Mucosa of descending colon (tissue), 3 donors: ENCODE measurements at regions of chr3 and their contacts with region 1.

Region 1: DNA sequence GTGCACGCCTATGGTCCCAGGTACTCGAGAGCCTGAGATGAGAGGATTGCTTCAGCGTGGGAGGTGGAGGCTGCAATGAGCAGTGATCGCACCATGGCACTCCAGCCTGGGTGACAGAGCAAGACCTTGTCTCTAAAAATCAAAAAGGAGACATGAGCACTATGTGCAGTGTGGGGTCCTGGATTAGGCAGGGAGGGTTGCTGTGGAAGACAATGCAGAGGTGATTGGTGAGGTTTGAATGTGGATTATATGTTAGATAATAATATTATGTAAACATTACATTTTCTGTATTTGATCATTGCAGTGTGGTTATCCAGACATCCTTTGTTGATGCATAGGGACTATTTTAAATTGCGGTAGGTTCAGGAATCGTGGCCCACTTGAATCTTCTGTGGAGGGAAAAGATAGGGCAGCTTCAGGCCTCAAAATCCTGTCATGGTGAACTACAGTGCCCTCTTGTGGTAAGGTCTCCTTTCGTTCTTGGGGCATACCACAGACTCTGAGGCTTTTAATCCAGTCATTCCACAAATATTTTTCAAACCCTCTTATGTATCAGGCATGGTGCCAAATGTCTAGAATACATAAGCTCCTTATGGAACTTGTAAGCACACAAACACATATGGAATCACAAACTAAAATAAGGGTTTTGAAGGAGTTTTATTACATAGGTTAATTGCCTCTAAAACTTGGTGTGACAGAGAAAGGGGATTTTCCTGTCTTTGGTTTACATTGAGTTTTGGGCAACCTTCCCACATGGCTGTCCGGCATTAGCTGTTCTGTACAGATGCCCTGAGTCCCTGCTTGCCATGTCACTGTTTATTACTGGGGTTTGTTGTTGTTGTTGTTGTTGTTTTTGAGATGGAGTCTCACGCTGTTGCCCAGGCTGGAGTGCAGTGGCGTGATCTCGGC is 37.7 kb downstream of the GPD1L start:
- DNase-seq: peak in 1 of 3 donors; percentile 86
- ATAC-seq: peak; percentile 87
- H3K4me3 ChIP-seq: no peak overlapping the region
- H3K4me1 ChIP-seq: no peaks in the 10 kb centered on the region
- CTCF ChIP-seq: peak; percentile 55

Region 2: DNA sequence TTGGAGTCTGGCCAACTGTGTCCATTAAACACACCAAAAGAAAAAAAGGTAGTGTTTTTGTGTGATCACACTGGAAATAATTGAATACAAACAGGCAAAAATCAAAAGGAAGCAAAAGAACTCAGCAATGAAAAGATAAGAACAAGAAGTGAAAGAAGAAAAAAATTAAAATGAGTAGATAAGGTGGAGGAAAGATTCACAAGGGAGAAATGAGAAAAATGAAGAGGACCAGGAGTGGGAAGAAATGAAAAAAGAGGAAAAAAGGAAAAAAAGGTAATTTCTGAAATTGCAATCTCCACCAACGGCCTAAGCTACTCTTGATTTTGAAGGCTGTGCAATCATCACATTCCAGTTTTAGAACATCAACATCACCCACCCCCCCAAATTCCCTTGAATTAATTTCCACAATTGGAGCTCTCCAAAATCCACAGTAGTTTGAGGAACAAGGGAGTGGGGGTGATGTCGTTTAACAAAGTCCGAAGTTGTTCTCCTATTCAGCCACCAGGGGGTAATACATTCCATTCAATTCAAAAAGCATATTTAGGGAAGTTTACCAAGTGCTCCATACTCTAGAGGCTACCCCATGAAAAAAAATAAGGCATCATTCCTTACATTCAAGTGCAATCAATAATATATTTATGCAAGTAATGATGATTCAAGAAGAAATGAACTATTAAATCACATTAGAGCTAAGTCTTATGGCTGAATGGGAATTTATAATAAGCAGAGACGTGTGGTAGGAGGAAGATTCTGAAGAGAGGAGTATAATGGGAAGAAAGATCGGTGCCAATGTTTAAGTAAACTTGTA is 125.1 kb before region 1 on chr3:
- intact Hi-C with region 1: loop called (anchors 2 to 5 kb)
- DNase-seq: peak in 1 of 3 donors; percentile 43
- ATAC-seq: peak; percentile 86
- H3K4me3 ChIP-seq: no peak overlapping the region
- H3K4me1 ChIP-seq: no peaks in the 10 kb centered on the region
- CTCF ChIP-seq: peak; percentile 56

Region 3: GRCh38 chr3:32262086-32262600 is 118.0 kb after region 1 on chr3:
- intact Hi-C with region 1: no loop called
- DNase-seq: no peak
- ATAC-seq: no peak
- H3K4me3 ChIP-seq: no peak overlapping the region
- H3K4me1 ChIP-seq: no peaks in the 10 kb centered on the region
- CTCF ChIP-seq: no peak

Region 4: DNA sequence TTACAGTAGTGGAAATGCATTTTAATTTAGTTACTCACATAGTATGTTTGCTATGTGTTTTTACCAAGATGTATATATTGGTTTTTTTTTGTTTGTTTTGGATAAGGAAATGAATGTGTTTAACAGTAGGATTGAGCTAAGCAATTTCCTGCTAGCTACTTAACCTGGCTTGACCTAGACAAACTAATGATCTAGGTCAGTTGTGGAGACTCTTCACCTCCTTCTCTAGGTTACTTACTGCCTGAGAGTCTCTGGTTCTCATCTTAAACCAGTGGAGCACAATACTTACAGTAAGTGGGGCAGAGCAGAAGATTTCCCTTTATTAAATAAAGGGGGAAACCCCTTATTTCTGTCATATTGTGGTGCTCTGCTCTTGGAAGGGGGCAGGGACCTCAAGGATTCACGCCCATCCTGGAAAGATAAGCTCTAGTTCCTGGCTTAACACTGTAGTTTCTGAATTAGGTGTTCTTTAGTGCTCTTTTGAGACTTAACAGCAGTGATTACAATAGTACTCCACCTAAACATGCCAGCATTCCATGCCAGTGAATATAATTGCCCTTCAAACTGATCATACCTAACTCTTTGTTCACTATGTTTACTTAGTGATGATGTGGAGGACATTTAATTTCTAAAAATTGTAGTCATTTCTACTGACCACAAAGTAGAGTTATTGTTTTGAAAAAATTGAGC is 1216.2 kb after region 1 on chr3:
- intact Hi-C with region 1: no loop called
- DNase-seq: no peak
- ATAC-seq: peak; percentile 66
- H3K4me3 ChIP-seq: no peak overlapping the region
- H3K4me1 ChIP-seq: peaks cover 5% of the 10 kb centered on the region
- CTCF ChIP-seq: no peak